ENCODE measurements at regions of chr10 and their contacts with region 1.

Region 1: GRCh38 chr10:26860443-26861204 is at the start of gene ABI1:
- DNase-seq: peak; percentile 87
- ATAC-seq: peak; percentile 90
- H3K4me3 Mint-ChIP-seq: peak within 1 kb of the TSS; percentile 98
- H3K27ac Mint-ChIP-seq: peak within 1 kb of the TSS; percentile 98
- H3K4me1 Mint-ChIP-seq: peaks cover 43% of the 10 kb centered on the region
- H3K27me3 Mint-ChIP-seq: peaks cover 3% of the 10 kb centered on the region
- CTCF ChIP-seq: no peak
- total RNA-seq, gene ABI1: 76.7 and 83.5 TPM in 2 replicates

Region 2: DNA sequence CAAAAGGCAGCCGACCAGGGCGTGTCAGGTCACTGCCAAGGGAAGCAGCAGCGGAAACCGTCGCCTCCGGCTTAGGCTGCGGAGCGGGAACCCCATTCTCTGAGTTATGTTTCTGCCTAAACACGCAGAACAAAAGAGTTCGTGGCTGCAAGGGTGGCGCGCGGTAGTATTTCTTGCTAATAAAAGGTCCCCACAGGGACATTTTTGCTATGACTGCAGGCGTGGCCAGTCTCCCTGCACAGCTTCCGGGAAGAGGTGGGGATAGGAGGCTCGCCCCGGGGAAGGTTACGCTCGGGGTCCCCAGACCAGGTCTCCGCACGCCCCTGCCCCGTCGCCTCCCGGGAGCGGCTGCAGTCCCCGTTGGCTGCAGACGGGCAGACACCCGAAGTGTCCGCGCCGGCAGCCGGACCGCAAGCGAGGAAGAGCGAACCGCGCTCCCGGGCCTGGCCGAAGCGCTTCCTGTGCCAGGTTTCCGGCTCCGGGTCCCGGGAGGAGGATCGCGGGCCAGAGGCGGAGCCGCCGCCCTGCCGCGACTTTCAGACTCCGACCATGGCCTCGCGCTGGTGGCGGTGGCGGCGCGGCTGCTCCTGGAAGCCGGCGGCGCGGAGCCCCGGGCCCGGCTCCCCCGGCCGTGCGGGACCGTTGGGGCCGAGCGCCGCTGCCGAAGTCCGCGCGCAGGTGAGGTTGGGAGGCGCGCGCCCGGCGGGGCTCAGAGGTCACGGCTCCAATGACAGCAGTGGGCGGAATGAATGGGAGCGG is 163.3 kb before region 1 on chr10 and contains the start of gene PDSS1:
- CTCF ChIA-PET with region 1: no interaction called
- POLR2A ChIA-PET with region 1: interaction called, 7 read pairs
- intact Hi-C with region 1: loop called (anchors 1 kb)
- DNase-seq: peak; percentile 65
- ATAC-seq: peak; percentile 87
- H3K4me3 Mint-ChIP-seq: peak within 1 kb of the TSS; percentile 93
- H3K27ac Mint-ChIP-seq: peak within 1 kb of the TSS; percentile 84
- H3K4me1 Mint-ChIP-seq: peaks cover 27% of the 10 kb centered on the region
- H3K27me3 Mint-ChIP-seq: no peaks in the 10 kb centered on the region
- CTCF ChIP-seq: no peak
- total RNA-seq, gene PDSS1: 8.7 and 9.0 TPM in 2 replicates

Region 3: GRCh38 chr10:26780793-26781601 is 79.6 kb before region 1 on chr10:
- CTCF ChIA-PET with region 1: no interaction called
- POLR2A ChIA-PET with region 1: interaction called, 9 read pairs
- intact Hi-C with region 1: loop called (anchors 1 kb)
- DNase-seq: no peak
- ATAC-seq: peak; percentile 94
- H3K4me3 Mint-ChIP-seq: peak overlapping the region; percentile 72
- H3K27ac Mint-ChIP-seq: peak overlapping the region; percentile 88
- H3K4me1 Mint-ChIP-seq: peaks cover 86% of the 10 kb centered on the region
- H3K27me3 Mint-ChIP-seq: no peaks in the 10 kb centered on the region
- CTCF ChIP-seq: no peak

Region 4: DNA sequence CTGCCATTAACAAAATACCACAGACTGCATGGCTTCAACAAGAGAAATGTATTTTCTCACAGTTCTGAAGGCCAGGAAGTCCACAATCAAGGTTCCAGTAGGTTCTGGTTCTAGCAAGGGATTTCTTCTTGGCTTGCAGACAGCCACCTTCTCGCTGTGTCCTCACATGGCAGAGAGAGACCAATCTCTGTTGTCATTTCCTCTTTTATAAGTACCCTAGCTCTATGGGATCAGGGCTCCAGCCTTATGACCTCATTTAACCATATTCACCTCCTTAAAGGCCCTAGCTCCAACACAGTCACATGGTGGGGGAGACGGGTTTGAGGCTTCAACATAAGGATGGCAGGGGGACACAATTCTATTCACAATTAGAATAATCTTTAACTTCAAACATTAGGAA is 23.5 kb before region 1 on chr10:
- CTCF ChIA-PET with region 1: interaction called, 5 read pairs
- POLR2A ChIA-PET with region 1: interaction called, 9 read pairs
- intact Hi-C with region 1: loop called (anchors 2 kb)
- DNase-seq: no peak
- ATAC-seq: peak; percentile 73
- H3K4me3 Mint-ChIP-seq: no peak overlapping the region
- H3K27ac Mint-ChIP-seq: peak overlapping the region; percentile 68
- H3K4me1 Mint-ChIP-seq: peaks cover 83% of the 10 kb centered on the region
- H3K27me3 Mint-ChIP-seq: no peaks in the 10 kb centered on the region
- CTCF ChIP-seq: no peak

Region 5: GRCh38 chr10:27041196-27041595 is 180.6 kb after region 1 on chr10:
- CTCF ChIA-PET with region 1: no interaction called
- POLR2A ChIA-PET with region 1: no interaction called
- intact Hi-C with region 1: no loop called
- DNase-seq: no peak
- ATAC-seq: no peak
- H3K4me3 Mint-ChIP-seq: no peak overlapping the region
- H3K27ac Mint-ChIP-seq: no peak overlapping the region
- H3K4me1 Mint-ChIP-seq: no peaks in the 10 kb centered on the region
- H3K27me3 Mint-ChIP-seq: no peaks in the 10 kb centered on the region
- CTCF ChIP-seq: no peak

Region 6: DNA sequence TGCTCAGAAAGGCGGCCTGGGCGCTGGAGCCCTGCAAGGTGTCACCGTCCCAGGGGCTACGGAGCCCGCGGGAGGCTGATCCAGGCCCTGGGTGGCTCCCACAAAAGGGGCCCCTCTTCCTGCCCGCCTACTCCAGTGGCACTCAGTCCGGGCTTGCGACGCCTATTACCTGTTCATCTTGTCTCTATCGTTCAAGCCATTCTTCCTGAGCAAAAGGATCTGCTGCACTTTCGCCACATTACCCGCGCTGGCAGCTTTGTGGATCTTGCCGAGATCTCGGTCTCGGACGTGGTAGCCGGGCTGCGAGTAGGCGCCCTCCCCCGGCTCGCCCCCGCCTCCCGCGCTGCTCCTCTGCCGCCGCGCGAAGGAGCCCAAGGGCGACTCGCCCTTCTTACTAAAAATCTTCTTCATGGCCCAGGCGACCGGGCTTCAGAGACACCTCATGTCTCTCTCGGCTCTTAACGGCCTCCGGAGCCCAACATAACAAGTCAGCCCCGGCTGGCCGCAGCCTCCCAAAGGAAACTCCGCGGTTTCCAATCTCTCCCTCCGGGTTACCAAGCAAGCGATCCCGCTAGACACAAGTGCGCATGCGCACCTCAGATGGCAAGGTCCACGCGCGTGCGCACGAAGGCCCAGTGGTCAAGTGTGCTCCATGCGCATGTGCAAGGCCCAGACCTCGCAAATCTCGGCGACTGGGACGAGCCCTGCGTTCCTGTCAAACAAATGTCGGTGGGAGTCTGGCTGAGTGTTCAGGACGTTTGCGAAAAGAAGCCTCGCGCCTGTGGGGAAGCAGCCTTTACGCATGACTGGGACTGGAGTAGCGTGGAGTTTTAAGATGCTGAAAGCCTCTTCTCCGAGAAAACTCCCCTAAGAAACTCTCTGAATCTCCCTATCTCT is 239.5 kb after region 1 on chr10 and contains the start of gene ANKRD26:
- CTCF ChIA-PET with region 1: no interaction called
- POLR2A ChIA-PET with region 1: no interaction called
- intact Hi-C with region 1: loop called (anchors 1 kb)
- DNase-seq: peak; percentile 92
- ATAC-seq: peak; percentile 93
- H3K4me3 Mint-ChIP-seq: peak within 1 kb of the TSS; percentile 94
- H3K27ac Mint-ChIP-seq: peak within 1 kb of the TSS; percentile 96
- H3K4me1 Mint-ChIP-seq: peaks cover 18% of the 10 kb centered on the region
- H3K27me3 Mint-ChIP-seq: no peaks in the 10 kb centered on the region
- CTCF ChIP-seq: no peak
- total RNA-seq, gene ANKRD26: 6.0 and 7.7 TPM in 2 replicates

Region 7: DNA sequence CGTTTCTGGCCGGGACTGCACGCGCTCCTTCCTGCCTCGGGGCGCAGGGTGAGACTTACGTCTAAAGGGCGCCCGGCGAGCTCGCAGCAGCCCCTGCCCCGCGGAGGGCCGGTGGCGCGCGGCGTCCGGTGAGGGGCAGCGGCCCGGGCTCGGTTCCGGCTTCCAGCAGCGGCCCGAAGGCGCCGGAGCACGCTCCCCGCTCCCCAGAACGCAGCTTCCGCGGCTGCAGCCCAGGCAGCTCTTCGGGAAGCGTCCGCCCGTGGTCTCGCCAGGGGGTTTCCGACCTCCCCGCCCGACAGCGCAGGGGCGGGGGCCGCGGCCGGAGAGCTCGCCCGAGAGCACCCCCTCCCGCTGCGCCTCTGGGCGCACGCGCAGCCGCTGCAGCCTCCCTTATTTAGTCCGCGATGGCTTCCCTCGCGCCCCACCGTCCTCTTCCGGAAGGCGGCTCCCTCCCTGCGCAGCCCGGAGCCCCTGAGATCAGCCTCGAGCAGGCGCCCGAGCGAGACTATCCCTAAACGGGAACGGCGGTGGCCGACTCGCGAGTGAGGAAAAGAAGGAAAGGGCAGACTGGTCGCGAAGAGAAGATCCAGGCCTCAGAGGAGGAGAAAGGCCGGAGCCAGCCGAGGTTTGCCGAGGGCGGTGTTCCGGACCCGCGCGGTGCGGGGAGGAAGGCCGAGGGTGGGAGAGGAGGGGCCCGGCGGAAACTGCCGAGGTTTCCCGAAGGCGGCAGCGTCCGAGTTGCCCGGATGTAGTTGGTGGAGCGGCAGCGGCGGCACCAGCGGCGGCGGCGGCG is 1672.0 kb after region 1 on chr10 and contains the start of gene WAC:
- CTCF ChIA-PET with region 1: no interaction called
- POLR2A ChIA-PET with region 1: no interaction called
- intact Hi-C with region 1: loop called (anchors 5 kb)
- DNase-seq: peak; percentile 97
- ATAC-seq: peak; percentile 79
- H3K4me3 Mint-ChIP-seq: peak within 1 kb of the TSS; percentile 99
- H3K27ac Mint-ChIP-seq: peak within 1 kb of the TSS; percentile 100
- H3K4me1 Mint-ChIP-seq: peaks cover 63% of the 10 kb centered on the region
- H3K27me3 Mint-ChIP-seq: no peaks in the 10 kb centered on the region
- CTCF ChIP-seq: no peak
- total RNA-seq, gene WAC: 145 and 159 TPM in 2 replicates

Measured in activated B cell treated with CpG ODN at 0.5 μM for 24 hours (primary cell).